Posterior vena cava (tissue), 2 donors: ENCODE measurements at regions of chr22 and their contacts with region 1.

Region 1: GRCh38 chr22:25447686-25448434 is 116.6 kb upstream of the GRK3 start:
- DNase-seq: peak; percentile 97

Region 2: DNA sequence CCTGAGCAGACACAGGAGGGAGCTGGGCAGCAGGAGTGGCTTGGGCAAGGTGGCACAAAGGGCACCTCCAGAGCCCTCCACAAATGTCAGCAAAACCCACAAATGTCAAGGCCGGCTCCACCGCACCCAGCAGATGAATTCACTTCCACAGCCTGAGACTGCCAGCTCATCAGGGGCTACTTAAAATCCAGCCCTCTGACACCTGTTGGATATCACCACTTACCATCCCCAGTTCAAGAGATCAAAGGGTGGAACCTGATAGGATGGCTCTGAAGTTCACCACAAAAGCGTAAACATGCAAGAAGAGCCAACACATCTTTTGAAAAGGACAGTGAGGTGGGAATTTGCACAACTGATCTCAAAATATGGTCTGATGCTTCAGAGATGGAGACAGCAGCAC is 51.9 kb before region 1 on chr22:
- intact Hi-C with region 1: no loop called
- DNase-seq: no peak

Region 3: DNA sequence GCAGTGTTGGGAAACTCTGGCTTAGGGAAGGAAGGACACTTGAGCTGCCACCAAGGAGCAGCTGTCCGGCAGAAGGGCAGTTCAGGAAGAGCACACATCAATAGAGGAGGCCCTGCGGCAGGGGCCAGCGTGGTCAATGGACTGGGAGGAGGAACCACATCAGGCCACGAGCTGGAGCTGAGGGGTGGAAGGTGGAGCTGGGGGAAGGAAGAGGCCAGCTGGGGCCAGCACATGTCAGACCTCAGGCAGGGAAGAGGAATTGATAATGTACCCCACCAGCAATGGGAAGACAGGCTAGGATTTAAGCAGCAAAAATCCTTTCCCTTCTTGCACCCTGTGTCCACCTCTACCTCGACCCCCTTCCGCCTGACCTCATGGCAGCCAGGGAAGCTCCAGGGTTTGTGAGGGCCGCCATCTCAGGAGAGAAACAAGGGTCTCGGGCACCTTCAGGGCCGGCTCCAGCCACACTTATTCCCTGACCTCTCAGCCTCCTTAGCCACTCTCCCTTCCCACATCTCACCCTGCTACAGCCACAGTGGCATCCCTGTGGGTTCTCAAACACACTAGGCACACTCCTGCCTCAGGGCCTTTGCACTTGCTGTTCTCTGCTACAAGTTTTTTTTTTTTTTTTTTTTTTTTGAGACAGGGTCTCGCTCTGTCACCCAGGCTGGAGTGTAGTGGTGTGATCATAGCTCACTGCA is 41.2 kb before region 1 on chr22:
- intact Hi-C with region 1: loop called in 1 of 2 experiments (anchors 2 kb)
- DNase-seq: peak; percentile 84

Region 4: DNA sequence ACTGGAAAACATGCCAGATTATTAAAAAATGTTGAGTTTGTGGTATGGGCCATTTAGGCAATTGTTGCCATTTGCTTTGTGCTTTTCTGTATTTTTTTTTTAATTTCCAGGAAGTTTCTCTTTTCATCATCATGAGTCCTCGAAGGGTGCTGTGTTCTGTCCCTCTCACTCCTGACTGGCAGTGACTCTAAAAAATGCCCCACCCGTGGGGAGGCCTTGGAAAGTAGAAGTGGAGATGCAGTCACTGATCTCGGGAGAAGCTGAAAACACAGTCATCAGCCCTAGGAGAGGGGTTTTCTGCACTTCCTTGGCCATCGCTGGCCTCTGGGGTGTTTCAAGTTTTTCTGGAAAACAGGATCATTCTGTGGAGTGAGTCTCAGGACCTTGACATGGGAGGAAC is 18.1 kb after region 1 on chr22:
- intact Hi-C with region 1: no loop called
- DNase-seq: no peak

Region 5: DNA sequence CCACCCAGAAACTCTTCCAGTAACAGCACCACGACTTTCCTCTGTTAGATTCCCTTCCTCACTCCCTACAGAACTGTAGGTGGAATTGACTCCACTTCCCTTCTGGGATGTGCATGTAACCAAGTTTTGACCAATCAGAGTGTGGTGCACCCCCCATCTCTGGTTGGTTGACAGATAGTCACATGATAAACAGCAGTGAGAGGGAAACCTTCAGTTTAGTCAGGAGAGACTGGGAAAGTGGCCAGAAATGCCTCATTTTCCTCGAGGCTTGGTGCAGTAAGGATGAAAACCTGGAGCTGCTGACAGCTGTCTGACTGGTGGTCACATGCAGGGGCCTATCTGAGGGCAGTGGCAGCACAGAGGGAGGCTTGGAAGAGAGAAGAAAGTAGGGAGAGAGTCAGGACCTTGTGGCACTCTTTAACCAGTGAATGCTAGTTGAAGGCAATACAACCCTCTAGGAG is 49.4 kb after region 1 on chr22:
- intact Hi-C with region 1: no loop called
- DNase-seq: no peak

Region 6: GRCh38 chr22:25696763-25697667 is 249.2 kb after region 1 on chr22:
- intact Hi-C with region 1: loop called in 1 of 2 experiments (anchors 5 kb)
- DNase-seq: no peak